Activated naive CD8-positive, alpha-beta T cell treated with anti-CD3 and anti-CD28 coated beads, Interleukin-2, amount 10 ng/mL, durations not matched to agents 7 days and 5 days (primary cell): ENCODE measurements at regions of chr5 and their contacts with region 1.

Region 1: GRCh38 chr5:176447982-176448608 is at the start of gene FAF2:
- DNase-seq: peak; percentile 100
- ATAC-seq: peak; percentile 98
- H3K4me3 Mint-ChIP-seq: peak within 1 kb of the TSS; percentile 98
- H3K27ac Mint-ChIP-seq: peak within 1 kb of the TSS; percentile 97
- H3K4me1 Mint-ChIP-seq: peaks cover 24% of the 10 kb centered on the region
- H3K27me3 Mint-ChIP-seq: peaks cover 3% of the 10 kb centered on the region
- total RNA-seq, gene FAF2: 32.4 TPM

Region 2: DNA sequence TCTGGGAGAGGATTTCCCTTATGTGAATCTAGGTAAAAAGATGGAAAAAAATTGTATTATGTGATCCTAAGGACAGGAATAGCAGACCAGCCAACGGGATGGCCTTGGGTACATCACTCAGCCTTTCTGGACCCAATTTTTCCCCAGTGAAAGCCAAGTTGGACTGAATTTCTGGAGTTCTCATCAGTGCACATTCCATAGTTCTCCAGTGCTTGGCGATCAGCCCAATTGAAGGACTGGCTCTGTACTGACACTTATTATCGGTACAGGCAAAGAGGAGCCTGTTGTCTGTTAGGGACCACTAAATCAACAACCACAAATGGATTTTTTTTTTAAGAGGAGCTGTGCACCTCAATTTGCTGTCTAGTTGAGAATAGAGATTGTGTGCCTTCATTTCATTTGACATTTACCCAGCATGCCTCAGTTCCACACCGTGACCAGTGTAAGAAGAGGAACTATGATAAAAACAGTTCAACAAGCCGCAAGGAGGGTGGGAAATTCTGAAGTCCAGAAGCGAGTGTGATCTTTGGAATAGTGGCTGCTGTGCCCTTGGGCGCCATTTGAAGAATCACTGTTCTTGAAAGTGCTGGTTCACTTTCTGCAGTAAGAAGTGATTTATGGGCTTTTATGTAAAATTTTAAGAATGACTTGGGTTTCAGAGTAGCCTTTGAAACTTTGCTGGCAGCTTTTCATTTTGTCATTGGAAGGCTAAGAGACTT is 74.8 kb before region 1 on chr5:
- POLR2A ChIA-PET with region 1: no interaction called
- DNase-seq: no peak
- ATAC-seq: no peak
- H3K4me3 Mint-ChIP-seq: no peak overlapping the region
- H3K27ac Mint-ChIP-seq: no peak overlapping the region
- H3K4me1 Mint-ChIP-seq: no peaks in the 10 kb centered on the region
- H3K27me3 Mint-ChIP-seq: no peaks in the 10 kb centered on the region

Region 3: GRCh38 chr5:176481711-176482110 is 33.6 kb after region 1 on chr5:
- POLR2A ChIA-PET with region 1: no interaction called
- DNase-seq: no peak
- ATAC-seq: no peak
- H3K4me3 Mint-ChIP-seq: no peak overlapping the region
- H3K27ac Mint-ChIP-seq: no peak overlapping the region
- H3K4me1 Mint-ChIP-seq: peaks cover 12% of the 10 kb centered on the region
- H3K27me3 Mint-ChIP-seq: no peaks in the 10 kb centered on the region

Region 4: DNA sequence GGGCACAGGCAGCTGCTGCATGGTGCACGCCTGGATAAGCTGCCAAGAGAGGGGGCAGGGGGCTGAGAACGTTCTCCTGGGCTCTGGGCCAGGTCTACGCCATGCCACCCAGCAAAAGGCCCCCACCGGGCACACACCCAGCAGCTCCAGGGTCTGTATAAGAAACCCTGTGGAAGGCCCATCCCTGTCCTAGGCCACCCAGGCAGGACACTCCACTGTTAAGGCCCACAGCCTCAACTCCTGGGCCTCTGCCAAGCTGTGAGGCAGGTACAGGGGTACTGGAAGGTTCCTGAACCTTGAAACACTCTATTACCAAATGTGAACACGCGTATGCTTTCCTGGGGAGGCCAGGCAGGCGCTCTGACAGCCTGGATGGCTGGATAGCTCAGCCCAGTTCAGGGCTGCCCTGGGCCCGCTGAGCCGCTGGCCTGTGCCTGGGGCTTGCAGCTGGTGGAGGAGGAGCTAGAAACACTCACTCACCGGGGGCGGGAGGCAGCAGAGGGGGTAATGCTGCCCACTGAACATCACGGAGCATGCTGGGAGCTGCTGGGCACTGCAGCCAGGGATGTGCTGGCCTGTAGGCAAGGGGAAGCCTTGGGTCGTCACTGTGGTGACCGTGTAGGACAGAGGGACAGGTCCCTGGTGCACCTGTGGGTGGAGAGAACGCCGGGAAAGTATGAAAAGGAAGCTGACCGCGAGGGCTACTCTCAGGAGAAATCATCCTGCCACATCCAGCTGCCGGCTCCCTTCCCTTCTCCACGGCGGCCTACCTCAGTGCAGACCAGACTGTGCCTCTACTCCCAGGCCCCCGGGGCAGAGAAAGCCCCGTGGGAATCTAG is 83.1 kb after region 1 on chr5:
- POLR2A ChIA-PET with region 1: interaction called, 60 read pairs
- DNase-seq: peak; percentile 63
- ATAC-seq: peak; percentile 17
- H3K4me3 Mint-ChIP-seq: peak overlapping the region; percentile 96
- H3K27ac Mint-ChIP-seq: peak overlapping the region; percentile 95
- H3K4me1 Mint-ChIP-seq: peaks cover 52% of the 10 kb centered on the region
- H3K27me3 Mint-ChIP-seq: no peaks in the 10 kb centered on the region